HCT116 (cell line): ENCODE measurements at regions of chr1 and their contacts with region 1.

Region 1: DNA sequence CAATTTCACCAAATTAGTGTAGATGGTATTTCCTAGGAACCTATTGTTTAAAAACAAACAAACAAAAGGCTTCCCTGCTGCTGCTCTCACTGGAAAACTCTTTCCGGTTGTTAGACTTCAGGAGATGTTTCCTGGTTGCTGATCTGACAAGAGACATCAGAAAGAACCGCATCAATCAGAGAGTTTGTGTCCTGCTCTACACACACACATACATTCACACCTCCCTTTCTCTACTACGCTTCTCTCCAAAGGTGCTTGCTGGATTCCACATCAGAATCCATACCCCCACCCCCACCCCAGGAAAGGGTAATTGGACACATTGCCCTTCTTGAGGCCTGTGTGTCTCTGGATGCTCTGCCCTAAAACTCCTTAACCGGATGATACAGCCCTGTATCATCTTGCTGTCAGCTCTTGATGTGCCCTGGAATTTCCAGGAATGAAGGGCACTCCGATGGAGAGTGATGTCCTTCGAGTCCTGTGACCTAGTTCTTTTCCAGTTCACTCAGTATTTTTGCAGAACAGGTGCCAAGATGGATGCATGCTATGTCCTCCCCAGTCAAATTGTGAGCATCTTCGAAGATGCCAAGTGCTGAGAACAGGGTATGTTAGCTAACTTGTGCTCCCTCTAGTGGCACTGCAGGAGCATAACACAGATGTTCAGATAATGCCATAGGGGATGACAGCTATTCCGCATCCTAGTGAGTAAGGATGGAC is 113.7 kb upstream of the SLC35F3 start:
- DNase-seq: peak; percentile 43
- ATAC-seq: peak; percentile 99
- H3K4me3 ChIP-seq: no peak overlapping the region
- H3K27ac ChIP-seq: no peak overlapping the region
- H3K4me1 ChIP-seq: no peaks in the 10 kb centered on the region
- H3K27me3 ChIP-seq: no peaks in the 10 kb centered on the region
- CTCF ChIP-seq: peak; percentile 81 to 95 (median 91)
- POLR2A ChIP-seq: no peak
- RAD21 ChIP-seq: peak; percentile 94

Region 2: DNA sequence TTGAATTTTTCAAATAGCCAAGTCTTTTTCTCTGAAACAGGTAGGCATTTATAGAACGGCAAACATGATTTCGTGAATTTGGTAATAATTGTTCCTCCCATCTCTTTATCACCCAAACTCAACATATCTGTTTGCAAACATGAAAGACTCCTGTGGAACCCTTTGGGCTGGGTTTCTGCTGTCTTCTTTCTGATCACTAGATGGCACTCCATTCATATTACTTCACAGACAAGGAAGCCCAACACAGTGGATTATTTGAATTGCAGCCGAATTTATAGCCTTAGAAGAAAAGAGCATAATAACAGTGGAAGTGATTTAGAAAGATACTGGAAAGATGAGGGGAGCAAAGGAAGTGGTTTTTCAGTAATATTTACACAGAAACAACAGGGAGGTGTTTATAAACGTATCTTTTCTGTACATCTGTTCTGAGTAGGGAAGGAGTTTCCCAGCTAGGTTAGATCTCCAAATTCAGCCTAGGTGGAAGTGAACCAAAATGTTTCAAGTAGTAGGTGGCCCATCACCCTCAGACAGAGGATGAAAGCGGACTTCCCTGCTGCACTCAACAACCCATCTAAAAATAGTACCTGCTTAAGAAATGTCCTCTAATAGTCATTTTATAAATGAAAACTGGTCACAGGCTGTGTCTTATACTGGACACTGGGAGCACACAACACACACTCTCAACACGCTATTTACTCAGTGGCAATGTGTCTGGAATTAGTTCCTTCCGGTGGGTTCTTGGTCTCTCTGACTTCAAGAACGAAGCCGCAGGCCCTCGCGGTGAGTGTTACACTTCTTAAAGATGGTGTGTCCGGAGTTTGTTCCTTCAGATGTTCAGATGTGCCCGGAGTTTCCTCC is 395.7 kb before region 1 on chr1:
- CTCF ChIA-PET with region 1: interaction called, 3 read pairs
- POLR2A ChIA-PET with region 1: no interaction called
- RAD21 ChIA-PET with region 1: no interaction called
- intact Hi-C with region 1: loop called (anchors 2 kb)
- DNase-seq: peak; percentile 54
- ATAC-seq: peak; percentile 97
- H3K4me3 ChIP-seq: no peak overlapping the region
- H3K27ac ChIP-seq: no peak overlapping the region
- H3K4me1 ChIP-seq: no peaks in the 10 kb centered on the region
- H3K27me3 ChIP-seq: no peaks in the 10 kb centered on the region
- CTCF ChIP-seq: peak; percentile 86 to 92 (median 86); a peak in 5 of 6 replicates
- POLR2A ChIP-seq: no peak
- RAD21 ChIP-seq: peak; percentile 93

Region 3: GRCh38 chr1:233440951-233441401 is 349.8 kb before region 1 on chr1:
- CTCF ChIA-PET with region 1: interaction called, 24 read pairs
- POLR2A ChIA-PET with region 1: no interaction called
- RAD21 ChIA-PET with region 1: interaction called, 4 to 5 read pairs
- intact Hi-C with region 1: loop called (anchors 1 kb)
- DNase-seq: peak; percentile 71
- ATAC-seq: peak; percentile 83
- H3K4me3 ChIP-seq: no peak overlapping the region
- H3K27ac ChIP-seq: no peak overlapping the region
- H3K4me1 ChIP-seq: peaks cover 0 to 14% of the 10 kb centered on the region in 2 experiments; a peak in 2 of 4 replicates
- H3K27me3 ChIP-seq: no peaks in the 10 kb centered on the region
- CTCF ChIP-seq: peak; percentile 69 to 81 (median 78)
- POLR2A ChIP-seq: no peak
- RAD21 ChIP-seq: peak; percentile 95

Region 4: GRCh38 chr1:233518349-233518748 is 272.5 kb before region 1 on chr1:
- CTCF ChIA-PET with region 1: interaction called, 12 read pairs
- POLR2A ChIA-PET with region 1: no interaction called
- RAD21 ChIA-PET with region 1: interaction called in 1 of 2 experiments, 8 read pairs
- intact Hi-C with region 1: loop called (anchors 1 kb)
- DNase-seq: peak; percentile 65
- ATAC-seq: peak; percentile 78
- H3K4me3 ChIP-seq: peak overlapping the region; percentile 8 to 32; a peak in 1 of 4 replicates
- H3K27ac ChIP-seq: no peak overlapping the region
- H3K4me1 ChIP-seq: peaks cover 4 to 24% of the 10 kb centered on the region in 2 experiments; a peak in 2 of 4 replicates
- H3K27me3 ChIP-seq: no peaks in the 10 kb centered on the region
- CTCF ChIP-seq: peak; percentile 86 to 93 (median 90)
- POLR2A ChIP-seq: peak; percentile 40
- RAD21 ChIP-seq: peak; percentile 82

Region 5: DNA sequence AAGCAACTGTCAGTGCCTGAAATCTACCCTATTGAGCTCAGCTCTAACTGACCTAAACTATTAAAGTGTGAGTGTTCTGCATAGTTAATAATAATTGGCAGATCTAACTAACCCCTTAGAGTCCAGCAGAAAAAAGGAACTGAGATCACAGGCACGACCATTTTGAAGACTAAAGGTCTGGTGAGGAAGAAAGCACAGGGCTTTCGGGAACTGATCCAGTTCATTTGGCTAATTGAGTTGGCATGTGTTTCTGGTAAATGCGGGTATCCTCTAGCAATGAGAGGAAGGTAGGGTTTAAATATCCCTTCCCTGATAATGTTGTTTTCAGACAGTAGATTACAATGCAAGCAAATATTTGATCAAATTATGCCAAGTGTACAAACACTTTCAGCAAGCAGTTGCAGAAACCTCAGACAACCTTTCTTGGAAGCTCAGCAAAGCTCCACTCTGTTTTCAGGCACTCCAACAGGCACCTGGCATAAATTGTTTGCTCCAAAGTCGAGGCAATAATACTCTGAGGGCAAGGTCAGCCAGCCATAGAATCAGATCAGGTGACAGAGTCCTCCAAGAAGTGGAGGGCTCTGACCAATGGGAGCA is 76.1 kb before region 1 on chr1:
- CTCF ChIA-PET with region 1: no interaction called
- POLR2A ChIA-PET with region 1: no interaction called
- RAD21 ChIA-PET with region 1: no interaction called
- intact Hi-C with region 1: no loop called
- DNase-seq: no peak
- ATAC-seq: no peak
- H3K4me3 ChIP-seq: no peak overlapping the region
- H3K27ac ChIP-seq: no peak overlapping the region
- H3K4me1 ChIP-seq: no peaks in the 10 kb centered on the region
- H3K27me3 ChIP-seq: no peaks in the 10 kb centered on the region
- CTCF ChIP-seq: no peak
- POLR2A ChIP-seq: no peak
- RAD21 ChIP-seq: no peak

Region 6: GRCh38 chr1:234065794-234066447 is 275.1 kb after region 1 on chr1:
- CTCF ChIA-PET with region 1: no interaction called
- POLR2A ChIA-PET with region 1: no interaction called
- RAD21 ChIA-PET with region 1: no interaction called
- intact Hi-C with region 1: loop called (anchors 2 kb)
- DNase-seq: peak; percentile 58
- ATAC-seq: peak; percentile 97
- H3K4me3 ChIP-seq: no peak overlapping the region
- H3K27ac ChIP-seq: no peak overlapping the region
- H3K4me1 ChIP-seq: no peaks in the 10 kb centered on the region
- H3K27me3 ChIP-seq: no peaks in the 10 kb centered on the region
- CTCF ChIP-seq: peak; percentile 75 to 81 (median 76)
- POLR2A ChIP-seq: no peak
- RAD21 ChIP-seq: peak; percentile 91